ENCODE measurements at regions of chr17 and their contacts with region 1.

Region 1: DNA sequence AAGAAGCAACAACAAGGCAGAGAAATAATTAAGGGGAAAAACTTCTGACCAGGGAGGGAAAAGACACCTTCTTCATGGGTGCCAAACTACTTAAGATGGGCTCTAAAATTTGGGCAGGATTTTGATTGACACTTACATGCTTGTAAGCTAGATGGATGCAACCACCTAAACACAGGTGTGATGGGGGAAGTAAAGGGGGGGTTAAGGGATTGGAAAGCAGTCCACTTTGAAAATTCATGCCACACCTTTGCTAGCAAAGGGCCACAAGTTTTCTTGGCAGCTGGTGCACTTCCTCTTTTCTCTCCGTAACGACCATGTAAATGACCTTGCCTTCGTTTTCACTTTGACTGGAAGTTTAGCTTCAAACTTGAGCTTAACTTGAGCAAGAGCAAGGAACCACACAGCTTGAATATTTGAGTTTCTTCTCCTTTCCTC is 14.3 kb upstream of the PRKAR1A start:
- DNase-seq: peak; percentile 99
- H3K4me3 ChIP-seq: peak overlapping the region; percentile 56
- H3K27ac ChIP-seq: peak overlapping the region; percentile 95
- H3K4me1 ChIP-seq: peaks cover 57% of the 10 kb centered on the region
- CTCF ChIP-seq: no peak

Region 2: GRCh38 chr17:68424942-68425386 is 72.9 kb before region 1 on chr17:
- CTCF ChIA-PET with region 1: no interaction called
- POLR2A ChIA-PET with region 1: no interaction called
- intact Hi-C with region 1: no loop called
- DNase-seq: no peak
- H3K4me3 ChIP-seq: no peak overlapping the region
- H3K27ac ChIP-seq: no peak overlapping the region
- H3K4me1 ChIP-seq: no peaks in the 10 kb centered on the region
- CTCF ChIP-seq: no peak

Region 3: DNA sequence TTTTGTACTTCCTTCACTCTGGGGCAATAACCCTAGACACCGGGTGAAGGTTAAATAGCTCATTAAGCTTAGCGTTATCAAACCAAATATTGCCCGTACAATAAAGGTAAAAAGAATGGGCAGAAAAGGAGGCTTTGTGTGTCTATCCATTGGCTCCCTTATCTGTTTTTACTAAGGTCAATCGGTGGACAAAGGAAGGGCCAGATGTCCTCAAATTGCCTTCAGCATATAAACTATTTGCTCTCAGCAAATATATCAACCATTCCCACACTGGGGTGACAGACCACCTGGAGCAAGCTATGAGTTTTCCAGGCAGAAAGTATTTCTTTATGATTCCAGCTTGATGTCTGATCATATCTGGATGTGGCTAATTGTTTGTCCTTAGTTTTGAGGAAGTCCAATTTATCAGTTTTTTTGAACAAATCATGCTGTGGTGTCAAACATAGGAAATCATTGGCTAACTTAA is 15.3 kb before region 1 on chr17:
- CTCF ChIA-PET with region 1: interaction called, 15 read pairs
- POLR2A ChIA-PET with region 1: interaction called, 53 read pairs
- intact Hi-C with region 1: no loop called
- DNase-seq: no peak
- H3K4me3 ChIP-seq: no peak overlapping the region
- H3K27ac ChIP-seq: no peak overlapping the region
- H3K4me1 ChIP-seq: peaks cover 31% of the 10 kb centered on the region
- CTCF ChIP-seq: no peak

Region 4: GRCh38 chr17:68512247-68512982 is 14.5 kb after region 1 on chr17 and contains the start of gene PRKAR1A:
- CTCF ChIA-PET with region 1: interaction called, 19 read pairs
- POLR2A ChIA-PET with region 1: interaction called, 81 read pairs
- intact Hi-C with region 1: loop called (anchors 1 kb)
- DNase-seq: peak; percentile 98
- H3K4me3 ChIP-seq: peak within 1 kb of the TSS; percentile 90
- H3K27ac ChIP-seq: peak within 1 kb of the TSS; percentile 65
- H3K4me1 ChIP-seq: peaks cover 48% of the 10 kb centered on the region
- CTCF ChIP-seq: no peak
- total RNA-seq, gene PRKAR1A: 158 and 228 TPM in 2 replicates

Region 5: GRCh38 chr17:68533887-68534694 is 36.2 kb after region 1 on chr17:
- CTCF ChIA-PET with region 1: no interaction called
- POLR2A ChIA-PET with region 1: interaction called, 10 read pairs
- intact Hi-C with region 1: no loop called
- DNase-seq: peak; percentile 28
- H3K4me3 ChIP-seq: no peak overlapping the region
- H3K27ac ChIP-seq: no peak overlapping the region
- H3K4me1 ChIP-seq: peaks cover 5% of the 10 kb centered on the region
- CTCF ChIP-seq: peak; percentile 85

Region 6: GRCh38 chr17:68591583-68591982 is 93.7 kb after region 1 on chr17:
- CTCF ChIA-PET with region 1: no interaction called
- POLR2A ChIA-PET with region 1: no interaction called
- intact Hi-C with region 1: no loop called
- DNase-seq: no peak
- H3K4me3 ChIP-seq: no peak overlapping the region
- H3K27ac ChIP-seq: no peak overlapping the region
- H3K4me1 ChIP-seq: no peaks in the 10 kb centered on the region
- CTCF ChIP-seq: no peak

Measured in OCI-LY7 (cell line).